Activated CD4-positive, alpha-beta T cell treated with anti-CD3 and anti-CD28 coated beads for 36 hours (primary cell): ENCODE measurements at regions of chr4 and their contacts with region 1.

Region 1: DNA sequence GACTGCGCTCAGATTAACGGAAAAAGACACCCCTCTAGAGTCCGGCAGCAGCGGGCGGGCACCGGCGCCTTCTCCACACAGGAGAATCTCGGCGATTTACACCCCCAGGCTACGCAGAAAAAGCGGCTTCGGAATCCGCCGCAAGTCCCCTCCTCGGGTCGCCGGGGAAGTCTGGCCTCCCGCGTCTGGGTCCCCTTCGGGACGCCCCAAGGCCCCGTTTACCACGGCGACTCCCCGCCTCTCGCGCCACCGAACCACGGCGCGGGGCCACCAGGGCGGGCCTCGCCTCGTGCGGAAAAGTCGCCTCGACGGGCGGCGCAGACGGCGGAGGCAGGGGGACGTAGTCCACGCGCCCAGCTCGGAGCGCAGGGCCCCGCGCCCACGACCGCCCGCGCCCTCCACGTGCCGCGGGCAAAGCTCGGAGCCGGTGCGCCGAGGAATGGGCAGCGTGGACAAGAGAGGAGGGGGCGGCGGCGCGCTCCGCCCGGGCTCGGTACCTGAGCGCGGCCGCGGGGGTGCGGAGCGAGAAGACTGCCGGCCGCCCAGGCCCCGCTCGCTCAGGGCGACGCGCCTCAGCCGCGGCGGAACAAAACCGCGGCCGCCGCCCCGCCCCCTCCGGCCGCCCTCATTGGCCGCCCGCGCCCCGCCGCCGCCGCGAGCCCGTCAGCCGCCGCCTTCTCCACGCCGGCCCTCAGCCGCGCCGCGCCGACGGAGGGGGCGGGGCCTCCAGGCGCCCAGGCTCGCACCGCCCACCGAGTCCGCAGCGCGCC is at the start of gene FAM53A:
- DNase-seq: no peak
- ATAC-seq: peak; percentile 96
- H3K4me3 Mint-ChIP-seq: peak within 1 kb of the TSS; percentile 69
- H3K27ac Mint-ChIP-seq: peak within 1 kb of the TSS; percentile 69
- H3K4me1 Mint-ChIP-seq: peaks cover 12% of the 10 kb centered on the region
- H3K27me3 Mint-ChIP-seq: no peaks in the 10 kb centered on the region
- total RNA-seq, gene FAM53A: 2.0 to 2.5 TPM

Region 2: GRCh38 chr4:1721004-1721665 is 37.2 kb after region 1 on chr4 and contains the starts of genes TACC3 and TMEM129:
- CTCF ChIA-PET with region 1: interaction called, 6 read pairs
- POLR2A ChIA-PET with region 1: interaction called, 3 read pairs
- intact Hi-C with region 1: loop called in 1 of 2 experiments (anchors 1 kb)
- DNase-seq: peak; percentile 96
- ATAC-seq: peak; percentile 81
- H3K4me3 Mint-ChIP-seq: peak within 1 kb of the TSS; percentile 96
- H3K27ac Mint-ChIP-seq: peak within 1 kb of the TSS; percentile 99
- H3K4me1 Mint-ChIP-seq: peaks cover 52% of the 10 kb centered on the region
- H3K27me3 Mint-ChIP-seq: no peaks in the 10 kb centered on the region
- total RNA-seq, gene TACC3: 197 to 206 TPM
- total RNA-seq, gene TMEM129: 13.7 to 14.6 TPM